ENCODE measurements at regions of chr9 and their contacts with region 1.

Region 1: GRCh38 chr9:97615439-97616072 is 17.6 kb downstream of the TSTD2 start:
- DNase-seq: peak; percentile 72
- H3K4me3 Mint-ChIP-seq: no peak overlapping the region
- H3K27ac Mint-ChIP-seq: no peak overlapping the region
- H3K4me1 Mint-ChIP-seq: peaks cover 14% of the 10 kb centered on the region
- H3K27me3 Mint-ChIP-seq: no peaks in the 10 kb centered on the region

Region 2: GRCh38 chr9:97468658-97469448 is 146.7 kb before region 1 on chr9:
- CTCF ChIA-PET with region 1: interaction called, 12 read pairs
- POLR2A ChIA-PET with region 1: no interaction called
- DNase-seq: peak; percentile 42
- H3K4me3 Mint-ChIP-seq: no peak overlapping the region
- H3K27ac Mint-ChIP-seq: no peak overlapping the region
- H3K4me1 Mint-ChIP-seq: no peaks in the 10 kb centered on the region
- H3K27me3 Mint-ChIP-seq: no peaks in the 10 kb centered on the region

Measured in activated CD4-positive, alpha-beta T cell treated with anti-CD3 and anti-CD28 coated beads, Interleukin-2, amount 10 ng/mL, durations not matched to agents 7 days and 5 days (primary cell).